Posterior vena cava (tissue), 2 donors: ENCODE measurements at regions of chr1 and their contacts with region 1.

Region 1: DNA sequence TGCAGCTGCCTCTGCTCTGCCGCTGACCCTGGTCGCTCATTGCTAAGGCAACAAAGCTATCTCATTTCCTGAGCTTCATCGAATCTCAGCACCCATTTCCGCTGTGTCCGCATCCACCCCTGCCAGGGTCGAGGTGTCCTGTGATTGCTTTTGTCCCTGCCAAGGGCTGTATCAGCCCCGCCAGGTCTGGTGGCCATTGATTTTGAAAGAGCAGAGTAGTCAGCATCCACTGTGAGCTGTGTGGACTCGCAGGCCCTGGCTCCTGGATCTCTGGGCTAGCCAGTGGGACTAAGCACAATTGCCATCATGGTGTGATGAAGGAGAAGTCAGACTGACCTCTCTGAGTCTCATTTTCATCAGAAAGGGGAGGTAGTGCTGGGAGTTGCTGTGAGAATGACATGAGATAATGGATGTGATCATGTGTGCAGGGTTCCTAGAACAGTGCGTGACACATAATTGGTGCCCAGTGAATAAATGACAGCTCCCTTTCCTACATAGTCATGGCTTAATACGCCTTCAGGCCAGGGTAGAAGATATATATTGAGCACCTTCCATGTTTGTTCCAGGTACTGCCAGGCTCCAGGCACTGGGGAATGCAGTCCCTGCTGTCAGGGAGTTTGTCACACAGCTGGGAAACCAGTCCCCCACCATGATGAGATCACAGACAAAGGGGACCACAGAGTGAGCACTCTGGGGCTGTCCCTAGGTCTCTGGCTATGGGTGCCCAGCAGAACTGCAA is 32.1 kb downstream of the NAV1 start:
- DNase-seq: no peak

Region 2: DNA sequence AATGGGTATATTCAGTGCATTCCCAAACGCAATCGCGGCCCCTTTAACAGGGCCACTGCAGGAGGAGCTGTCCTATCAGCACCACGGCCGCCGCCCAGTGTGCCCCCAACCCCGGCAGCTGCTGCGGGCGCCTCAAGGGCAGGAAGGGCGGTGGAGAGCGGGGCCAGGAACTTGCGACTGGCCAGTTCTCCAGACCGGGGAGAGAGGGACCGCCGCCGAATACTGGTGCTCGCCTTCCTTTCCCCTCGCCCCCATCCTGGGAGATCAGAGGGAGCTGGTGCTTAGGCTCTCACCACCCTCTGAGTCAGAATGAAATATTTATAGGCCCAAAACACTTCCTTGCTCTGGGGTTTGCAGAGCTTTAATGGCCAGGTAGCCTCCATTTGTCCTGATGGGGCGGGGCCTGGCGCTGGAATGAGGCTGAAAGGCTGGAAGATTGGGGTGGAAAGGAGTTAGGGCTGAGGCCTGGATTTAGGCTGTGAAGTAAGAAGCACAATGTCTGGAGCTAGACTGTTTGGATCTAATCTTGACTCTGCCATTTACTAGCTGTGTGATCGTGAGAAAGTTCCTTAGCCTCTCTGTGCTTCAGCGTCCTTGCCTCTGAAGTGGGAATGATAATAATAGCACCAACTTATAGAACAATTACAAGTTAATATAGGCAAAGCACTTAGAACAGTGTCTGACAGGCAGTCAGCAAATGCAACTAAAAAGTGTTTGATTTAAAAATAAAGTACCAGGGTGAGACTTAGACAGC is 43.4 kb after region 1 on chr1:
- intact Hi-C with region 1: loop called in 1 of 2 experiments (anchors 1 kb)
- DNase-seq: peak; percentile 86